ENCODE measurements at regions of chr12 and their contacts with region 1.

Region 1: GRCh38 chr12:93144109-93144508 is 215.0 kb upstream of the EEA1 start:
- DNase-seq: no peak
- ATAC-seq: peak; percentile 60 to 75 (median 64)
- H3K4me3 ChIP-seq: no peak overlapping the region
- H3K27ac ChIP-seq: peak overlapping the region; percentile 78
- H3K4me1 ChIP-seq: peaks cover 42% of the 10 kb centered on the region
- H3K27me3 ChIP-seq: no peaks in the 10 kb centered on the region
- CTCF ChIP-seq: no peak

Region 2: GRCh38 chr12:93176165-93176564 is 32.1 kb after region 1 on chr12:
- intact Hi-C with region 1: loop called in 1 of 2 experiments (anchors 5 kb)
- DNase-seq: no peak
- ATAC-seq: peak in 3 of 4 donors; percentile 33 to 58 (median 43)
- H3K4me3 ChIP-seq: no peak overlapping the region
- H3K27ac ChIP-seq: peak overlapping the region; percentile 58
- H3K4me1 ChIP-seq: peaks cover 54% of the 10 kb centered on the region
- H3K27me3 ChIP-seq: no peaks in the 10 kb centered on the region
- CTCF ChIP-seq: no peak

Region 3: GRCh38 chr12:93191956-93192355 is 47.8 kb after region 1 on chr12:
- intact Hi-C with region 1: loop called in 1 of 2 experiments (anchors 5 kb)
- DNase-seq: peak; percentile 47 to 74
- ATAC-seq: peak; percentile 78 to 93 (median 90)
- H3K4me3 ChIP-seq: peak overlapping the region; percentile 29
- H3K27ac ChIP-seq: peak overlapping the region; percentile 76
- H3K4me1 ChIP-seq: peaks cover 34% of the 10 kb centered on the region
- H3K27me3 ChIP-seq: no peaks in the 10 kb centered on the region
- CTCF ChIP-seq: no peak